ENCODE measurements at regions of chr11 and their contacts with region 1.

Region 1: DNA sequence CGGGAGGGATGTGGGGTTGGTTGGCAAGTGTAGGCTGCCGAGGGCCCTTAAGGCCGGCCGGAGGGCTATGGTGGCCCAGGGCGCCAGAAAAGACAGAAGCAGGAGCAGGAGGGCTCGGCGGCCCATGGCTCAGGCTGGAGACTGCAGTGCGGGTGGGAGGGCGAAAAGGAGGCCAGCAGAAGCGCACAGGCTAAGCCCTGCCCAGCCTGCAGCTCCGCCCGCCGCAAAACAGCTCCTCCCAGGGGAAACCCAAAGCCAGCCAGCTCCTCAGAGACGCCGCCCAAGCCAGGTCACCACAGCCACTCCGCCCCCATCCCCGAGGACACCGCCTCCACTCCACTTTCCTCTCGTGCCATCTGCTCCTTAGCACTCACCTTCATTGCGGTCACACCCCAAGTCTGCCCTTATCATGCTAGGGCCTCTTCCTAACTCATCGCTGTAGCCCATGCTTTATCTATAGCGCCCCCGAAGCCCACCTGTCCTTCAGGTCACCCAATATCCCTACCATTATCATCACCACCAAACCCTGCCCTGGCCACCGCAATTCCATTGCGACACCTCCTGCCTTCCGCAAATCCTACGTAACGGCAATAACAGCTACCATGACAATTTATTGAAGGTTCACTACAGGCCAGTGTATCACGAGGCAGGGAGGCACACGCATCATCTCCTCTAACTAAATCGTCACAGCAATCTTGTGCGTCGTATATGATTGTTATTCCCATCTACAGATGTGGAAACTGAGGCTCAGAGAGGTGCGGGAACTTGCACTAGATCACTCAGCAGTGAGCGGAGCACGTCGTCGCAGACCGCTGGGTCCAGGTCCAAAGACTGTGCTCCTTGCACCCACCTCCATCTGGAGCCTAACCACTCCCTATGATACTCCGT is at the start of gene PRCP:
- H3K4me3 Mint-ChIP-seq: peak within 1 kb of the TSS; percentile 100
- H3K27ac Mint-ChIP-seq: peak within 1 kb of the TSS; percentile 100
- H3K4me1 Mint-ChIP-seq: peaks cover 63% of the 10 kb centered on the region
- H3K27me3 Mint-ChIP-seq: no peaks in the 10 kb centered on the region

Region 2: DNA sequence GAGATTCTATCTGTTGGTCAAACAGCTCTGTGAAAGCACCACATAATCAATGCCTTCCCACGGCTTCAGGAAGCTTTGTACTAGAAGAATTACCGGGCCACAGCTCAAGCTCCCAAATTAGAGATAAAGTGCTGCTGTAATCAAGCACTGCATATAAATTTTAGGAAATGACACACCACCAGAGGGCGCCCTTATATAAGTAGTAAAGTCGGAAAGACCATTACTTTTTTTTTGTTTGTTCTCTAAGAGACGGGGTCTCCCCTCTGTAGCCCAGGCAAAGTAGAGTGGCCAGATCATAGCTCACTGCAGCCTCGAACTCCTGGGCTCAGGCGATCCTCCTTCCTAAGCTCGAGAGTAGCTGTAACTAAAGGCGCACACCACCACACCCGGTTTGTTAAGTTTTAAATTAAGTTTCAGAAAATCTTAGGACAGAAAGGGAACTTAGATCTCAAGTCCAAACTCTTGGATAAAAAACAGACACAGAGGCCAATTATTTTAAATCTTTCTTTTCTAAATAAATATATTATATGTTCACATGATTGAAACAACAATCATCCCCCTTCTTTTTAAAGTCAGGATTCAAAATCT is 32.9 kb before region 1 on chr11:
- intact Hi-C with region 1: loop called (anchors 1 kb)
- H3K4me3 Mint-ChIP-seq: peak overlapping the region; percentile 72
- H3K27ac Mint-ChIP-seq: peak overlapping the region; percentile 63
- H3K4me1 Mint-ChIP-seq: peaks cover 42% of the 10 kb centered on the region
- H3K27me3 Mint-ChIP-seq: no peaks in the 10 kb centered on the region

Region 3: DNA sequence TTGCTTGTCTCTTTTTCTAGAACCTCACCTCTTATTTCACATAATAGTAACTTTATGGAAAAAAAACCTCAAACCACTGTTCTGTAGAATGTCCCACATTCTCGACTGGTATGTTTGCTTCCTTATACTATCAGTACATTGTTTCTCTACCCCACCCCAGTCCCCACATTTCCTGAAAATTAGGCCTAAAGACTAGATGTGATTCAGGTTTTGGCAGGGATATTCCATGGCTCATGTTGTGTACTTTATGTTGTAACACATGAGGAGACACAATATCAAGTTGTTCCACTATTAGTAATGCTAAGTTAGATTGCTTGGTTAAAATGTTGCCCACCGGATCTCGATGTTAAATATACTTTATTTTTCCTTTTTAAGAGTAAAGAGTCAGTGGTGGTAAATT is 35.7 kb after region 1 on chr11:
- intact Hi-C with region 1: no loop called
- H3K4me3 Mint-ChIP-seq: no peak overlapping the region
- H3K27ac Mint-ChIP-seq: no peak overlapping the region
- H3K4me1 Mint-ChIP-seq: no peaks in the 10 kb centered on the region
- H3K27me3 Mint-ChIP-seq: peaks cover 3% of the 10 kb centered on the region

Region 4: DNA sequence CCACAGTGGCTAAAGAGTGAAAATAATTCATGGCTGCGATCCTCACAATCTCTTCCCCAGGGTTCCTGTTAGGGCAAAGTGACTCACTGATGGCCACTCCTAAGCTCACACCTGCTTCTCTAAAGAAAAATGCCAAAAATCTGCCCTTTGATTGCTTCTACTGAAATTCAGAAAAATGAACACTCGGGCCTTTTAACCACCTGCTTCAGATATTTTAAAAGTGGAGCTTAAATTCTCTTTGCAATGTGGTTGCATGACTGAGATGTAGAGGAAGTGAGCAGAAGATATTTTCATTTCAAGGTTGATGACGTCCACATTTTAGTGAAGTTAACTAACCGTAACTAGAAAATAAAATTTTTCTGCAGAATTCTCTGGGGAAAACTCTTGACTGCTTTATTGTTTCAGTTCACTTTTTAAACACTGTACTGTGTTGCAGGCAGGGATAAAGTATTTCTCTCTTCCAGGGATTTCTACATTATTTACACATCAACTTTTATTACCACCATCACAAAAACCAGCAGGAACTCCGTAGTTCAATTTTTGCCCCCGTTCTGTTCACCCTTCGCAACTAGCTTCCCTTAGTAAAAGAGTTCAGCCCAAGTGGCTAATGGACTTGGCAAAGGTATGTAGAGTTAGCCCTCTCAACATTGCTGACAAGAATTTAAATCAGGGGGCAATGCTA is 162.7 kb after region 1 on chr11:
- intact Hi-C with region 1: loop called (anchors 2 kb)
- H3K4me3 Mint-ChIP-seq: peak overlapping the region; percentile 51
- H3K27ac Mint-ChIP-seq: peak overlapping the region; percentile 80
- H3K4me1 Mint-ChIP-seq: peaks cover 64% of the 10 kb centered on the region
- H3K27me3 Mint-ChIP-seq: peaks cover 11% of the 10 kb centered on the region

Region 5: GRCh38 chr11:83156150-83156995 is 255.9 kb after region 1 on chr11:
- intact Hi-C with region 1: loop called (anchors 1 kb)
- H3K4me3 Mint-ChIP-seq: peak overlapping the region; percentile 96
- H3K27ac Mint-ChIP-seq: peak overlapping the region; percentile 100
- H3K4me1 Mint-ChIP-seq: peaks cover 19% of the 10 kb centered on the region
- H3K27me3 Mint-ChIP-seq: no peaks in the 10 kb centered on the region

Region 6: GRCh38 chr11:83285771-83286528 is 385.4 kb after region 1 on chr11 and contains the start of gene CCDC90B:
- intact Hi-C with region 1: loop called (anchors 1 kb)
- H3K4me3 Mint-ChIP-seq: peak within 1 kb of the TSS; percentile 97
- H3K27ac Mint-ChIP-seq: peak within 1 kb of the TSS; percentile 100
- H3K4me1 Mint-ChIP-seq: peaks cover 32% of the 10 kb centered on the region
- H3K27me3 Mint-ChIP-seq: no peaks in the 10 kb centered on the region

Measured in dendritic cell treated with granulocyte-macrophage colony-stimulating factor and Interleukin-4, amounts not matched to agents 40 ng/mL and 50 ng/mL, for 4 days (primary cell).